ENCODE measurements at regions of chr2 and their contacts with region 1.

Region 1: DNA sequence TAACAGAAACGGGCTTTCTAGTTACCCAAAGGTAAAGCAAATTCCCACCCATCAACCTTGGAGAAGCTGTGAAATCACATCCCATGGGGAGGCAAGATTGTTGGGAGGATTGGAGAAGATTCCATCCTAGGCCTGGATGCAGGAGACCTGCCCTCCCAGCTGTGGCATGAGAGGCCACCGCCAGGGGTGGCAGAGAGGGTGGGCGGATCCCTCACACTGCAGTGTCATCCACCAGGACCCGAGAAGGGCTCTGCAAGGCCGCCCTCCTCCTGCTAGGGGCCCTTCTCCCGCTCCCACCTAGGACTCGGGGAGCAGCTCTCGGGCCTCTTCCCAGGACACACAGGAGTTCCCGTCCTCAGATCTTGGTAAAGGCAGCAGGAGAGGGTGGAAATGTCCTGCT is 15.5 kb upstream of the ATG16L1 start:
- DNase-seq: no peak
- ATAC-seq: no peak; the same call in 2 of the 3 replicates
- H3K4me3 ChIP-seq: no peak overlapping the region
- H3K27ac ChIP-seq: no peak overlapping the region
- H3K4me1 ChIP-seq: peaks cover 18 to 27% of the 10 kb centered on the region in 2 experiments; a peak in 4 of 5 replicates
- H3K27me3 ChIP-seq: no peaks in the 10 kb centered on the region
- CTCF ChIP-seq: no peak
- EP300 ChIP-seq: no peak
- POLR2A ChIP-seq: no peak
- RAD21 ChIP-seq: no peak

Region 2: DNA sequence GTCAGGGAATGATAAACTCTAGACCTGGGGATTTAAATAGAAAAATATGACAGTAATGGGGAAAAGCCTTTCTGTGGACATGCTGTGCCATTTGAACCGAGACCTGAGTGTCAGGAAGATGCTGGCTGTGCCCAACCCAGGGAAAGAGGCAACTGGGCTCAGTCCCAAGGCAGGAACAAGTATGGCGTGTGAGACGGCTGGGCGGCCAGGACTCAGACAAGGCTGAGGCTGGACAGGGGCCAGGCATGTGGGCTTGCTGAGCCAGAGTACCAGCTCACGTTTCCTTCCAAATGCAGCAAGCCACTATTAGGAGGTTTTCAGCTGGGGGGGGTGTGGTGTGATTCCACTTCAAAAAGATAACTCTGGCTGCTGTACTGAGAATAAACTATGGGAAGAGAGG is 83.4 kb before region 1 on chr2:
- CTCF ChIA-PET with region 1: no interaction called
- POLR2A ChIA-PET with region 1: no interaction called
- in situ Hi-C with region 1: no loop called
- intact Hi-C with region 1: no loop called
- DNase-seq: no peak
- ATAC-seq: no peak
- H3K4me3 ChIP-seq: no peak overlapping the region
- H3K27ac ChIP-seq: no peak overlapping the region
- H3K4me1 ChIP-seq: no peaks in the 10 kb centered on the region; a peak in 2 of 5 replicates
- H3K27me3 ChIP-seq: no peaks in the 10 kb centered on the region
- CTCF ChIP-seq: no peak
- EP300 ChIP-seq: no peak
- POLR2A ChIP-seq: no peak
- RAD21 ChIP-seq: no peak

Region 3: DNA sequence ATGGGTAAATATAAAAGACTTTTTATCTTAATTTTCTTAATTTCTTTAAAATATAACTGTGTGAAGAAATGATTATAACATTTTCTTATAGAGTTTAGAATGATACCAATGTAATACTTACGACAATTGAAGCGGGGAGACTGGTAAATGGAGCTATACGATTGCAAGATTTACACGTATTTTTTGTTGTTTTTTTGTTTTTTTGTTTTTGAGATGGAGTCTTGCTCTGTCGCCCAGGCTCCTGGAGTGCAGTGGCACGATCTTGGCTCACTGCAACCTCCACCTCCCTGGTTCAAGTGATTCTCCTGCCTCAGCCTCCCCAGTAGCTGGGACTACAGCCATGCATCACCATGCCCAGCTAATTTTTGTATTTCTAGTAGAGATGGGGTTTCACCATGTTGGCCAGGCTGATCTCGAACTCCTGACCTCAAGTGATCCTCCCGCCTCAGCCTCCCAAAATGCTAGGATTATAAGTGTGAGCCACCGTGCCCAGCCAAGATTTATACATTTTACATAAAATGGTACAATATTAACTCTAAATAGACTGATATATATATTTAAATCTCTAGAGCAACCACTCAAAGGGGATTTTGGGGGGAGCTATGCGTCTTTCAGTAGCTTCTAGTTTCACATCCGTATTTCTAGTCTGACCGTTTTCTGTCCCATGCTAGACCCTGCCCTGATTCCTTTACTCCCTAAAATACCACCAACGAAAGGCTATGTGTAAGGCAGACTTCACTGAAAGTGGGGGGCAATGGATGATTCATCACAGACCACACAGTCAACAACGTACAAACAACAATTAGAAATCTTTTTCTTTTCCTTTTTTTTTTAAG is 12.7 kb before region 1 on chr2:
- CTCF ChIA-PET with region 1: no interaction called
- POLR2A ChIA-PET with region 1: interaction called, 11 read pairs
- in situ Hi-C with region 1: no loop called
- intact Hi-C with region 1: no loop called
- DNase-seq: no peak
- ATAC-seq: no peak
- H3K4me3 ChIP-seq: no peak overlapping the region
- H3K27ac ChIP-seq: no peak overlapping the region
- H3K4me1 ChIP-seq: peaks cover 32 to 51% of the 10 kb centered on the region in 2 experiments
- H3K27me3 ChIP-seq: no peaks in the 10 kb centered on the region
- CTCF ChIP-seq: no peak
- EP300 ChIP-seq: no peak
- POLR2A ChIP-seq: no peak
- RAD21 ChIP-seq: no peak

Region 4: DNA sequence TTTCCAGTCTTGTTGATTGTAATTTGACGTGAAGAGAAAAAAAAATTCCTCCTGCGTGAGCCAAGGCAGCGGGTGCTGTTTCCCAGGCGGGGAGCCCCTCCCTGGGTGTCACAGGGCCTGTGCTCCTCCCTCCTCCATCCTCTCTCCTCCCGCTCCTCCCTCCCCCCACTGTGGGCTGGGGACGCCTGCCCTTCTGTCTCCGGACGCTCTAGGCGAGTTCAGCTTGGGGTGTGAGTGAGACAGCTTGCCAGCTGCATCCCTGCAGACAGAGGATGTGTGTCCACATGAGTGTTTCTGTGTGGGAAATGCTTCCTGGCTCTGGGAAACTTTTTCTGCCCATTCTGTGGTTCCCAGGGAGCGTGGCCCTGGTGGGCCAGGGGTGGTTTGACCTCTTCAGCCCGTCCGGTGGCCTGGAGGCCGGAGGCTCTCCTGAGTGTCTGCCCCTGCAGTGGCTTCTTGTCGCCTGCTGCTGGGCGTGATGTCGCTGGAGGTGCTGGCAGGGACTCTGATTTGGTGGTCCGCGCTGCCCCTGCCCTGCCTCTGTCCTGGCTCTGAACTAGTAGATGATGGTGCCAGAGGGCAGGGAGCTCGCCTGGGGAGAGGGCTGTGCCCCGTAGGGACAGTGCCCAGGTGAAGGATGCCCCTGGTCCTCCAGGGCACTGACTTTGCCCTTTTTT is 234.2 kb after region 1 on chr2:
- CTCF ChIA-PET with region 1: no interaction called
- POLR2A ChIA-PET with region 1: no interaction called
- in situ Hi-C with region 1: no loop called
- intact Hi-C with region 1: no loop called
- DNase-seq: peak; percentile 27 to 43 (median 32)
- ATAC-seq: peak; percentile 77
- H3K4me3 ChIP-seq: no peak overlapping the region
- H3K27ac ChIP-seq: no peak overlapping the region; the same call in 2 of the 3 replicates
- H3K4me1 ChIP-seq: peaks cover 4 to 39% of the 10 kb centered on the region in 2 experiments; a peak in 3 of 5 replicates
- H3K27me3 ChIP-seq: no peaks in the 10 kb centered on the region
- CTCF ChIP-seq: no peak
- EP300 ChIP-seq: no peak
- POLR2A ChIP-seq: no peak
- RAD21 ChIP-seq: no peak

Region 5: DNA sequence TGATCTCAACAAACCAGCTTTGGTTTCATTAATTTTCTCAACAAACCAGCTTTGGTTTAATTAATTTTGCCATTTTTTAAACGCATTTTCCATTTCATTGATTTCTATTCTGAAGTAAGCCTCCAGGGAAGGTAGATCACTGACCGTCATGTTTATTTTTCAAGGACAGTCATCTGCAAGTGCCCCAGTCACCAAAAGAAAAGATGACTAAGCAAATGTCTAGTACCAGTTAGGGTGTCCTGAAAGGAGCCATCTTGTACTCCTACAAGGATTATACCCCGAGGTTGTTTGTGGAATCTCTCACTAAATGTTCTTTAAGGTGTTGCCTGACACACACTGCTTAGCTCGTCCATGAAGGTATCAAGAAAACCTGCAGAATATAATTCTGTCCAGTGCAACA is 375.3 kb after region 1 on chr2:
- CTCF ChIA-PET with region 1: no interaction called
- POLR2A ChIA-PET with region 1: no interaction called
- in situ Hi-C with region 1: no loop called
- intact Hi-C with region 1: no loop called
- DNase-seq: no peak
- ATAC-seq: no peak
- H3K4me3 ChIP-seq: no peak overlapping the region
- H3K27ac ChIP-seq: no peak overlapping the region
- H3K4me1 ChIP-seq: no peaks in the 10 kb centered on the region
- H3K27me3 ChIP-seq: no peaks in the 10 kb centered on the region
- CTCF ChIP-seq: no peak
- EP300 ChIP-seq: no peak
- POLR2A ChIP-seq: no peak
- RAD21 ChIP-seq: no peak